ENCODE measurements at regions of chr2 and their contacts with region 1.

Region 1: GRCh38 chr2:218357236-218358159 is 841 bp downstream of the CATIP start:
- DNase-seq: no peak
- H3K4me3 ChIP-seq: peak overlapping the region; percentile 6 to 11
- H3K27ac ChIP-seq: peak overlapping the region in 1 of 2 donors; percentile 56
- H3K4me1 ChIP-seq: no peaks in the 10 kb centered on the region
- H3K27me3 ChIP-seq: no peaks in the 10 kb centered on the region
- CTCF ChIP-seq: no peak
- POLR2A ChIP-seq: no peak

Region 2: GRCh38 chr2:218301176-218301819 is 56.2 kb before region 1 on chr2:
- intact Hi-C with region 1: loop called (anchors 5 kb)
- DNase-seq: peak; percentile 83
- H3K4me3 ChIP-seq: no peak overlapping the region
- H3K27ac ChIP-seq: peak overlapping the region; percentile 51 to 54
- H3K4me1 ChIP-seq: no peaks in the 10 kb centered on the region
- H3K27me3 ChIP-seq: no peaks in the 10 kb centered on the region
- CTCF ChIP-seq: peak; percentile 95 to 100 (median 98)
- POLR2A ChIP-seq: no peak

Measured in prostate gland (tissue), 2 donors.